ENCODE measurements at regions of chr1 and their contacts with region 1.

Region 1: GRCh38 chr1:177948336-177948972 is 21.4 kb downstream of the SEC16B start:
- DNase-seq: no peak
- H3K4me3 ChIP-seq: no peak overlapping the region
- H3K27ac ChIP-seq: no peak overlapping the region
- H3K4me1 ChIP-seq: peaks cover 0 to 11% (median 5%) of the 10 kb centered on the region in 3 donors
- H3K27me3 ChIP-seq: no peaks in the 10 kb centered on the region
- CTCF ChIP-seq: peak; percentile 57 to 88 (median 86)
- POLR2A ChIP-seq: no peak

Region 2: GRCh38 chr1:176897350-176898236 is 1050.9 kb before region 1 on chr1:
- intact Hi-C with region 1: loop called (anchors 10 kb)
- DNase-seq: no peak
- H3K4me3 ChIP-seq: peak overlapping the region in 1 of 4 donors; percentile 37
- H3K27ac ChIP-seq: no peak overlapping the region
- H3K4me1 ChIP-seq: peaks cover 0 to 9% (median 7%) of the 10 kb centered on the region in 3 donors
- H3K27me3 ChIP-seq: peaks cover 0 to 78% (median 0%) of the 10 kb centered on the region in 4 donors
- CTCF ChIP-seq: peak; percentile 43 to 54 (median 50)
- POLR2A ChIP-seq: no peak

Region 3: DNA sequence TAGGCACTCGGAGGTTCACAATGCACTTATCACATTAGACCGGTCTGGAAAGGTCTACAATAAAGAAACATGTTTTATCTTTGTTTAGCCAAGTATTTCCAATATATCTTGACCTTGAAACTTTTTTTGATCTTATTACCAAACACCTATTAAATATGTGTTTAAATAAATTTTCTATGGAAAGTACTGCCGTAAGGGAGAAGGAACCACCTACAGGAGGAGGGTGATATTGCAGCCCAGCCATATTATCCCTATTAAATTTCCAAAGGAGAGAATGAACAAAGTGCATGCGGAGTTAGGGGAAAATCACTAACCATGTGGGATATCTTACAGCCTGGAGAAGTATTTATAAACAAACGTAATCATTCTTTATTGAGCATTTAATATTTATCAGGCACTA is 763.2 kb before region 1 on chr1:
- intact Hi-C with region 1: loop called (anchors 5 kb)
- DNase-seq: no peak
- H3K4me3 ChIP-seq: no peak overlapping the region
- H3K27ac ChIP-seq: no peak overlapping the region
- H3K4me1 ChIP-seq: peaks cover 0 to 11% (median 3%) of the 10 kb centered on the region in 3 donors
- H3K27me3 ChIP-seq: peaks cover 0 to 33% (median 0%) of the 10 kb centered on the region in 4 donors
- CTCF ChIP-seq: peak in 4 of 6 experiments; percentile 26 to 62 (median 39)
- POLR2A ChIP-seq: no peak

Region 4: DNA sequence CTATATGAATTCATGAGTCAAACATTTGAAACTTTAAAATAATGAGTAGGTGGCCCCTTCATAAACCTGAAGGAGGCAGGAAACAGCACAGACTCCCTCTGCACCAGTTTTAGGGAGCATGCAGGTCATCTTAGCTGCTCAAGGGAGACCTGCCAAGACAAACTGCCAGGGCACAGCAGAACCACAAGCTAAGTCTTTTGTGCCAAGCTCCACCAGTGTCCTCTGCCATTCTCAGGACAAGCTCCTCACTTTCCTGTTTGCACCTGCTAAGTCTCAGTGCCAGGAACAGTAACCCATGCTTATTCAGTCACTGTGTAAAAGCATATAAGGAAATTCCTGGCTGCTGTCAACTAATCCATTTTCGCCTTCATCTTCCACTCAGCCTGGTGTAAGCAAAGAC is 347.5 kb before region 1 on chr1:
- intact Hi-C with region 1: no loop called
- DNase-seq: no peak
- H3K4me3 ChIP-seq: no peak overlapping the region
- H3K27ac ChIP-seq: no peak overlapping the region
- H3K4me1 ChIP-seq: no peaks in the 10 kb centered on the region
- H3K27me3 ChIP-seq: peaks cover 0 to 46% (median 0%) of the 10 kb centered on the region in 4 donors
- CTCF ChIP-seq: no peak
- POLR2A ChIP-seq: no peak

Measured in esophagus squamous epithelium (tissue), 5 donors.